PC-9 (cell line): ENCODE measurements at regions of chr4 and their contacts with region 1.

Region 1: GRCh38 chr4:40576631-40577480 is 52.8 kb downstream of the RBM47 start:
- DNase-seq: peak; percentile 76 to 97
- H3K4me3 ChIP-seq: peak overlapping the region; percentile 28; the same call in 1 of the 2 replicates
- H3K27ac ChIP-seq: peak overlapping the region; percentile 81
- H3K4me1 ChIP-seq: peaks cover 49% of the 10 kb centered on the region
- H3K27me3 ChIP-seq: no peaks in the 10 kb centered on the region
- CTCF ChIP-seq: no peak

Region 2: GRCh38 chr4:40520250-40520932 is 56.5 kb before region 1 on chr4:
- CTCF ChIA-PET with region 1: no interaction called
- POLR2A ChIA-PET with region 1: no interaction called
- intact Hi-C with region 1: no loop called
- DNase-seq: no peak
- H3K4me3 ChIP-seq: no peak overlapping the region
- H3K27ac ChIP-seq: no peak overlapping the region
- H3K4me1 ChIP-seq: peaks cover 31% of the 10 kb centered on the region
- H3K27me3 ChIP-seq: no peaks in the 10 kb centered on the region
- CTCF ChIP-seq: no peak

Region 3: GRCh38 chr4:40621592-40622512 is 45.0 kb after region 1 on chr4:
- CTCF ChIA-PET with region 1: no interaction called
- POLR2A ChIA-PET with region 1: no interaction called
- intact Hi-C with region 1: loop called (anchors 2 kb)
- DNase-seq: peak; percentile 75 to 95
- H3K4me3 ChIP-seq: peak overlapping the region; percentile 30; the same call in 1 of the 2 replicates
- H3K27ac ChIP-seq: peak overlapping the region; percentile 89
- H3K4me1 ChIP-seq: peaks cover 60% of the 10 kb centered on the region
- H3K27me3 ChIP-seq: no peaks in the 10 kb centered on the region
- CTCF ChIP-seq: no peak